Colonic mucosa (tissue), 4 donors: ENCODE measurements at regions of chr15 and their contacts with region 1.

Region 1: GRCh38 chr15:77633134-77633912 is 611 bp upstream of the LINGO1 start:
- DNase-seq: peak; percentile 91
- H3K4me3 ChIP-seq: peak overlapping the region; percentile 40
- H3K27ac ChIP-seq: no peak overlapping the region
- H3K4me1 ChIP-seq: peaks cover 8% of the 10 kb centered on the region
- H3K27me3 ChIP-seq: peaks cover 34% of the 10 kb centered on the region
- CTCF ChIP-seq: peak; percentile 99

Region 2: GRCh38 chr15:77821188-77821958 is 188.1 kb after region 1 on chr15:
- intact Hi-C with region 1: loop called (anchors 2 kb)
- DNase-seq: peak; percentile 49
- H3K4me3 ChIP-seq: no peak overlapping the region
- H3K27ac ChIP-seq: no peak overlapping the region
- H3K4me1 ChIP-seq: no peaks in the 10 kb centered on the region
- H3K27me3 ChIP-seq: peaks cover 42% of the 10 kb centered on the region
- CTCF ChIP-seq: peak; percentile 43

Region 3: DNA sequence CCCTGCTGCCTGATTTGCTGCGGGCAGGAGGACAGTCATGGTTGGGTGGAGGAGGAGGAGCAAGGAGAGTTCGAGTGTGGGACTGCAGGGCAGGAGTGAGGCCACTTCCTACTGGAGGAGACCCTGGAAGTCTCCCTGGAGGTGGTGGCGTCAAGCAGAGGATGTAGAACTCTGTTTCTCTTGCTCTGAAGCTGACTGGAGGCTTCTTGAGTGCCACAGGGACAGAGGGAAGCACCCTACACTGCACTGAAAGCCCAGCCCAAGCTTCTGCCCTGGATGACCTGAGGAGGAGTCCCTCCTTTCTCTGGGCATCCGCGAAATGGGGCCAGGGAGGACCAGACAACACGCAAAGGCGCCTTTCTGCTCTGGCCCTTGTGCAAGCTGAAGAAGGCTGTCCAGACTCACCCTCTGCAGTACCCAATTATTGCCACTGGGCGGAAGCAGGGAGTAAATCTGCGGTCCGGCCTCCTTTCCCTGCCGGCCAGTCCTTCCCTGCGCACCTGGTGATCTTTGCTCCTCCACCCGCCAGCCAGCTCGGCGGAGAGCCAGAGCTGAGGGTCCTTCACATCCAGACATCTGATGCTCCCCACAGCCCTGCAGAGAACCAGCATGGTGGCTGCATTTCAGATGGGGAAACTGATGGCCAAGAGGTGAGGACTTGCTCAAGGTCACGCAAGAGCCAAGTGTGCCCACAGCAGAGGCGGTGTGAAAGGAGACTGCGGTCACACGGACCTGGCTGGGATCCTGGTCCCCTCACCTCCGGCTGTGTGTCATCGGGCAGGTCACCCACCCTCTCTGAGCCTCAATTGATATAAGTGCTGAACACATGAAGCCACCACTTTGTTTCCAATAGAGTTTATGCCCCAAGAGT is 237.1 kb after region 1 on chr15:
- intact Hi-C with region 1: loop called (anchors 10 kb)
- DNase-seq: peak; percentile 80
- H3K4me3 ChIP-seq: no peak overlapping the region
- H3K27ac ChIP-seq: no peak overlapping the region
- H3K4me1 ChIP-seq: no peaks in the 10 kb centered on the region
- H3K27me3 ChIP-seq: no peaks in the 10 kb centered on the region
- CTCF ChIP-seq: peak; percentile 84